AG04449 (cell line): ENCODE measurements at regions of chr6 and their contacts with region 1.

Region 1: GRCh38 chr6:32825966-32826365 is 9.2 kb upstream of the HLA-DOB start:
- DNase-seq: no peak
- H3K4me3 ChIP-seq: no peak overlapping the region
- CTCF ChIP-seq: peak; percentile 24

Region 2: DNA sequence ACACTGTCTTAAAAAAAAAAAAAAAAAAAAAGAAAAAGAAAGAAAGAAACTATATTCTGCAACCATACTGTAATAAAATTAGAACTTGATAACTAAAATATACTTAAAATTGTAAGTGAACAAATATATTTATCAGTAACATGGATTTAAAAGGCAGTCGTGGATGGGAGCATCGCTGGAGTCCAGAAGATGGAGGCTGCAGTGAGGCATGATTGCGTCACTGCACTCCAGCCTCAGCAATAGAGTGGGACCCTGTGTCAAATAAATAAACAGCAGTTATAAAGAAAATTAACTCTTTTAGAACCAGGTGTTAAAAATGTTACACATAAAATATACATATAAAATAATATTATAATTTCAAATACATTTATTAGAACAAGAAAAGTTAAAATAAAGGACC is 36.8 kb after region 1 on chr6:
- CTCF ChIA-PET with region 1: interaction called, 77 read pairs
- POLR2A ChIA-PET with region 1: no interaction called
- DNase-seq: no peak
- H3K4me3 ChIP-seq: no peak overlapping the region
- CTCF ChIP-seq: no peak